Body of pancreas (tissue), 4 donors: ENCODE measurements at regions of chr11 and their contacts with region 1.

Region 1: GRCh38 chr11:67345920-67346799 is 7.2 kb downstream of the POLD4 start:
- DNase-seq: peak; percentile 65 to 80 (median 74)
- ATAC-seq: peak; percentile 93
- H3K4me3 ChIP-seq: no peak overlapping the region
- H3K27ac ChIP-seq: peak overlapping the region; percentile 68 to 82 (median 76)
- H3K4me1 ChIP-seq: peaks cover 65% of the 10 kb centered on the region
- H3K27me3 ChIP-seq: no peaks in the 10 kb centered on the region
- CTCF ChIP-seq: peak; percentile 21 to 86 (median 75)
- POLR2A ChIP-seq: peak in 2 of 3 donors; percentile 8 to 12

Region 2: GRCh38 chr11:67382276-67383136 is 36.3 kb after region 1 on chr11:
- intact Hi-C with region 1: loop called (anchors 5 kb)
- DNase-seq: peak; percentile 82 to 85 (median 84)
- ATAC-seq: peak; percentile 88
- H3K4me3 ChIP-seq: no peak overlapping the region
- H3K27ac ChIP-seq: no peak overlapping the region
- H3K4me1 ChIP-seq: no peaks in the 10 kb centered on the region
- H3K27me3 ChIP-seq: no peaks in the 10 kb centered on the region
- CTCF ChIP-seq: peak; percentile 92 to 98 (median 97)
- POLR2A ChIP-seq: no peak